ENCODE measurements at regions of chr2 and their contacts with region 1.

Region 1: DNA sequence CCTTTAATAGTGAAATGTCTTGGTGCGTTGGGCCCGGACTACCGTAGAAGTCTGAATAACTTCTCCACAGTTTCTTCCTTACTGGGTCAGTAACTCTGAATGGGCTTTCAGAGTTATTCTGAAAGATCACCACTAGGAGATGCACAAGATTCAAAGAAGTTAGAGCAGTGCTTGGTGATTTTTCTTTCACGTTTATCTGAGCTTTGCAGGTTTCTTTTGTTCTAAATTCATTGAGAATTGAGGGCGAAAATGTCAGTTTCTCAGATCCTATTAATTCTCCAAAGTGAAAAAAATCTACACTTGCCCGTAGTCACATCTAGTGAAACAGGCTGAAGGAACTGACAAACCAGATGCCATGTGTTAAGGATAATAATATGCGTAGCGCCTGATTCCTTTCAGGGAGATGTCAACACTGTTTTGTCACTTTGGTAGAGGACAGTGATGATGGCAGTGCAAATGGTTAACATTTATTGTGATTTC is 70.1 kb downstream of the QPCT start:
- DNase-seq: peak; percentile 71
- H3K4me3 ChIP-seq: no peak overlapping the region
- H3K27ac ChIP-seq: no peak overlapping the region
- H3K4me1 ChIP-seq: peaks cover 6% of the 10 kb centered on the region
- H3K27me3 ChIP-seq: no peaks in the 10 kb centered on the region
- CTCF ChIP-seq: peak; percentile 74 to 86
- POLR2A ChIP-seq: no peak

Region 2: DNA sequence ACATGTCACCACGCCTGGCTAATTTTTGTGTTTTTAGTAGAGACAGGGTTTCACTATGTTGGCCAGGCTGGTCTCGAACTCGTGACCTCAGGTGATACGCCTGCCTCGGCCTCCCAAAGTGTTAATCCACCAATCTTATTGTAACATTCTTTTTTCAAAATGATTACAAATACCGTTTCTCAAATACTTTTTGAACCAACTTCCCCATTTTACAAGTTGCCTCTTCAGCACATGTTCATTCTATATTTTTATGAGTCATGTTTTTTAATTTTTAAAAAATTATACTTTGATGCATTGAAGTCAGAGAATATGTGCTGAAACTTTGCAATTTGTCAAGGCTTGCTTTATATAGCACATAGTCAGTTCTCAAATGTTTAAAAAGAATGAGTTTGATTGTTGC is 11.9 kb before region 1 on chr2:
- CTCF ChIA-PET with region 1: interaction called, 57 read pairs
- POLR2A ChIA-PET with region 1: no interaction called
- dilution Hi-C with region 1: no loop called
- intact Hi-C with region 1: no loop called
- DNase-seq: no peak
- H3K4me3 ChIP-seq: no peak overlapping the region
- H3K27ac ChIP-seq: no peak overlapping the region
- H3K4me1 ChIP-seq: no peaks in the 10 kb centered on the region
- H3K27me3 ChIP-seq: no peaks in the 10 kb centered on the region
- CTCF ChIP-seq: no peak
- POLR2A ChIP-seq: no peak

Region 3: GRCh38 chr2:37537316-37537715 is 122.8 kb after region 1 on chr2:
- CTCF ChIA-PET with region 1: interaction called, 51 read pairs
- POLR2A ChIA-PET with region 1: no interaction called
- dilution Hi-C with region 1: no loop called
- intact Hi-C with region 1: loop called (anchors 1 kb)
- DNase-seq: no peak
- H3K4me3 ChIP-seq: no peak overlapping the region
- H3K27ac ChIP-seq: no peak overlapping the region
- H3K4me1 ChIP-seq: no peaks in the 10 kb centered on the region
- H3K27me3 ChIP-seq: no peaks in the 10 kb centered on the region
- CTCF ChIP-seq: no peak
- POLR2A ChIP-seq: no peak

Region 4: GRCh38 chr2:37593024-37593423 is 178.5 kb after region 1 on chr2:
- CTCF ChIA-PET with region 1: interaction called, 19 read pairs
- POLR2A ChIA-PET with region 1: no interaction called
- dilution Hi-C with region 1: no loop called
- intact Hi-C with region 1: no loop called
- DNase-seq: no peak
- H3K4me3 ChIP-seq: no peak overlapping the region
- H3K27ac ChIP-seq: no peak overlapping the region
- H3K4me1 ChIP-seq: peaks cover 32% of the 10 kb centered on the region
- H3K27me3 ChIP-seq: no peaks in the 10 kb centered on the region
- CTCF ChIP-seq: no peak
- POLR2A ChIP-seq: no peak

Region 5: GRCh38 chr2:37672104-37672869 is 257.8 kb after region 1 on chr2:
- CTCF ChIA-PET with region 1: interaction called, 27 read pairs
- POLR2A ChIA-PET with region 1: no interaction called
- dilution Hi-C with region 1: no loop called
- intact Hi-C with region 1: loop called (anchors 1 kb)
- DNase-seq: peak; percentile 85
- H3K4me3 ChIP-seq: peak overlapping the region; percentile 59 to 84 (median 67)
- H3K27ac ChIP-seq: peak overlapping the region; percentile 75
- H3K4me1 ChIP-seq: peaks cover 43% of the 10 kb centered on the region
- H3K27me3 ChIP-seq: no peaks in the 10 kb centered on the region
- CTCF ChIP-seq: no peak
- POLR2A ChIP-seq: no peak

Region 6: DNA sequence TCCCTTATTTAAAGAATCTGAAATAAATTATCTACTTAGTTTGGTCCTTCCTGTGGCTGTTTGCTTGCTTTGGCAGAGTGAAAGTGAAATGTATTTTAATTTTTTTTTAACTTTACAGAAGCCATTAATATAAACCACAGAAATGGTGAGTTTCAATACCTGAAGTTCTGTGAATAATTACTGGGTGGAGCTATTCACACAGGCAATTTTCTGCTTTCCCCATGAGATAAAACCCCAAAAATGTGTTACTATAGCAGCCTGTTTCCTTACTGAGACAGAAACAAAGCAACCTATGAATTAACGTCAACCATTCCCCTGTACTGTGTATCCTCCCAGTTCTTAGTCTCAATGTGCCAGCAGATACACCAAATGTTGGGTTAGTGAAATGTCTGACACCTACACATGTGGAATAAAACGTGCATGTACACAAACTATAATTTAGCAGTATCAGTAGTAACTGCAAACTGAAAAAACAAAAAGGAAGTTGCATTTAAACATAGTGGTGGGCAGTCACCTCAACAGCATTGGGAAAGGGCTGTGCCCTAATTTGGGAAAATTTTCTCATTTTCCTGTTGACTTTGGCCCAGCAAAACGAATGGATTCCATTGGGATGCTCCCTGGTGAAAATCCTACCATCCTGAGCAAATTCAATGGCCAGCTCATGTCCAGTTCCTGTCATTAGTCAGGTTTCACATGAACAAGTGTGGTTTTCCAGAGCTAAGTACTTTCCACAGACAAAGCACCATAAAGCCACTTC is 437.5 kb after region 1 on chr2:
- CTCF ChIA-PET with region 1: interaction called, 23 read pairs
- POLR2A ChIA-PET with region 1: no interaction called
- dilution Hi-C with region 1: loop called (anchors 25 kb)
- intact Hi-C with region 1: no loop called
- DNase-seq: no peak
- H3K4me3 ChIP-seq: no peak overlapping the region
- H3K27ac ChIP-seq: no peak overlapping the region
- H3K4me1 ChIP-seq: peaks cover 41% of the 10 kb centered on the region
- H3K27me3 ChIP-seq: no peaks in the 10 kb centered on the region
- CTCF ChIP-seq: no peak
- POLR2A ChIP-seq: no peak

Measured in endothelial cell of umbilical vein (primary cell).